ENCODE measurements at regions of chr14 and their contacts with region 1.

Region 1: GRCh38 chr14:101183376-101184103 is 280.0 kb upstream of the RTL1 start:
- DNase-seq: peak; percentile 36
- ATAC-seq: peak; percentile 92
- H3K4me3 ChIP-seq: no peak overlapping the region
- H3K27ac ChIP-seq: no peak overlapping the region
- H3K4me1 ChIP-seq: no peaks in the 10 kb centered on the region
- H3K27me3 ChIP-seq: peaks cover 0 to 35% of the 10 kb centered on the region in 2 experiments; a peak in 3 of 5 replicates
- CTCF ChIP-seq: peak; percentile 93
- EP300 ChIP-seq: no peak
- POLR2A ChIP-seq: no peak
- RAD21 ChIP-seq: peak; percentile 91

Region 2: GRCh38 chr14:101559624-101560533 is 376.3 kb after region 1 on chr14:
- CTCF ChIA-PET with region 1: no interaction called
- POLR2A ChIA-PET with region 1: no interaction called
- in situ Hi-C with region 1: loop called (anchors 5 kb)
- intact Hi-C with region 1: no loop called
- DNase-seq: no peak
- ATAC-seq: peak; percentile 68
- H3K4me3 ChIP-seq: peak overlapping the region in 2 of 3 experiments; percentile 19 to 54; a peak in 2 of 6 replicates
- H3K27ac ChIP-seq: no peak overlapping the region
- H3K4me1 ChIP-seq: peaks cover 11% of the 10 kb centered on the region
- H3K27me3 ChIP-seq: peaks cover 10 to 46% of the 10 kb centered on the region in 2 experiments; a peak in 4 of 5 replicates
- CTCF ChIP-seq: peak; percentile 43
- EP300 ChIP-seq: no peak
- POLR2A ChIP-seq: no peak
- RAD21 ChIP-seq: peak; percentile 51; the same call in 1 of the 2 replicates

Region 3: GRCh38 chr14:101628471-101628966 is 445.0 kb after region 1 on chr14:
- CTCF ChIA-PET with region 1: interaction called, 17 read pairs
- POLR2A ChIA-PET with region 1: no interaction called
- in situ Hi-C with region 1: loop called (anchors 5 kb)
- intact Hi-C with region 1: loop called (anchors 1 kb)
- DNase-seq: peak; percentile 25
- ATAC-seq: peak; percentile 84
- H3K4me3 ChIP-seq: peak overlapping the region in 2 of 3 experiments; percentile 34 to 59; a peak in 3 of 6 replicates
- H3K27ac ChIP-seq: no peak overlapping the region
- H3K4me1 ChIP-seq: peaks cover 15% of the 10 kb centered on the region
- H3K27me3 ChIP-seq: peaks cover 1 to 21% of the 10 kb centered on the region in 2 experiments; a peak in 3 of 5 replicates
- CTCF ChIP-seq: peak; percentile 96
- EP300 ChIP-seq: no peak
- POLR2A ChIP-seq: no peak
- RAD21 ChIP-seq: peak; percentile 97